ENCODE measurements at regions of chr6 and their contacts with region 1.

Region 1: GRCh38 chr6:379367-380181 is 12.0 kb upstream of the IRF4 start:
- DNase-seq: peak; percentile 49 to 54
- H3K4me3 ChIP-seq: no peak overlapping the region
- H3K27ac ChIP-seq: no peak overlapping the region
- H3K4me1 ChIP-seq: no peaks in the 10 kb centered on the region
- H3K27me3 ChIP-seq: peaks cover 77% of the 10 kb centered on the region
- CTCF ChIP-seq: no peak

Region 2: GRCh38 chr6:217048-217659 is 162.4 kb before region 1 on chr6:
- CTCF ChIA-PET with region 1: no interaction called
- POLR2A ChIA-PET with region 1: no interaction called
- intact Hi-C with region 1: loop called (anchors 10 kb)
- DNase-seq: peak in 1 of 2 experiments; percentile 5
- H3K4me3 ChIP-seq: no peak overlapping the region
- H3K27ac ChIP-seq: no peak overlapping the region
- H3K4me1 ChIP-seq: no peaks in the 10 kb centered on the region
- H3K27me3 ChIP-seq: peaks cover 5% of the 10 kb centered on the region; the same call in 1 of the 2 replicates
- CTCF ChIP-seq: peak; percentile 45